Caco-2 (cell line): ENCODE measurements at regions of chr4 and their contacts with region 1.

Region 1: GRCh38 chr4:169902658-169903345 is 123.4 kb downstream of the MFAP3L start:
- DNase-seq: peak in 1 of 2 experiments; percentile 22
- H3K4me3 ChIP-seq: no peak overlapping the region
- H3K4me3 Mint-ChIP-seq: no peak overlapping the region
- H3K27ac Mint-ChIP-seq: no peak overlapping the region
- H3K4me1 ChIP-seq: no peaks in the 10 kb centered on the region
- H3K4me1 Mint-ChIP-seq: no peaks in the 10 kb centered on the region
- H3K27me3 ChIP-seq: no peaks in the 10 kb centered on the region
- H3K27me3 Mint-ChIP-seq: peaks cover 11% of the 10 kb centered on the region
- CTCF ChIP-seq: peak in 1 of 2 experiments; percentile 8

Region 2: GRCh38 chr4:169968999-169969398 is 66.2 kb after region 1 on chr4:
- CTCF ChIA-PET with region 1: no interaction called
- POLR2A ChIA-PET with region 1: no interaction called
- intact Hi-C with region 1: loop called (anchors 5 kb)
- DNase-seq: no peak
- H3K4me3 ChIP-seq: no peak overlapping the region
- H3K4me3 Mint-ChIP-seq: no peak overlapping the region
- H3K27ac Mint-ChIP-seq: no peak overlapping the region
- H3K4me1 ChIP-seq: no peaks in the 10 kb centered on the region; the same call in 1 of the 2 replicates
- H3K4me1 Mint-ChIP-seq: peaks cover under 1% of the 10 kb centered on the region
- H3K27me3 ChIP-seq: no peaks in the 10 kb centered on the region
- H3K27me3 Mint-ChIP-seq: no peaks in the 10 kb centered on the region
- CTCF ChIP-seq: no peak